Posterior vena cava (tissue), 2 donors: ENCODE measurements at regions of chr2 and their contacts with region 1.

Region 1: DNA sequence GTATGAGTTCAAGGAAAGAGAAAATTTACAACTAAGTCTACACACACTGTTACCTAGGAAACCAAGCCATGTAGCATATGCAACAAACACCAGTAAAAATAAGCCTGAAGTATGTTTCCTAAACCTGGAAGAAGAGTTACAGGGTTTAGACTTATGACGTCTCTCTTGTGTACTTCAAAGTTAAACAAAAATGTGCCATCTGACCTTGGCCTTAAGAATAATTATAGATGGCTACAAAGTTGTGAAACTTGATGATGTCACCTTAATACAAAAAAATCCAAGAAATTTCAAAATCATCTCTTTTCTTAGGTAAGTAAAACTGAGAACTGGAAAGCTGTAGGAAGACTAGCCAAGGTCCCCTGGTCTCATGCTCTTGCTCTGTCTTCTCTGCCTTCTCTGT is 297.6 kb upstream of the NRXN1 start:
- DNase-seq: no peak

Region 2: DNA sequence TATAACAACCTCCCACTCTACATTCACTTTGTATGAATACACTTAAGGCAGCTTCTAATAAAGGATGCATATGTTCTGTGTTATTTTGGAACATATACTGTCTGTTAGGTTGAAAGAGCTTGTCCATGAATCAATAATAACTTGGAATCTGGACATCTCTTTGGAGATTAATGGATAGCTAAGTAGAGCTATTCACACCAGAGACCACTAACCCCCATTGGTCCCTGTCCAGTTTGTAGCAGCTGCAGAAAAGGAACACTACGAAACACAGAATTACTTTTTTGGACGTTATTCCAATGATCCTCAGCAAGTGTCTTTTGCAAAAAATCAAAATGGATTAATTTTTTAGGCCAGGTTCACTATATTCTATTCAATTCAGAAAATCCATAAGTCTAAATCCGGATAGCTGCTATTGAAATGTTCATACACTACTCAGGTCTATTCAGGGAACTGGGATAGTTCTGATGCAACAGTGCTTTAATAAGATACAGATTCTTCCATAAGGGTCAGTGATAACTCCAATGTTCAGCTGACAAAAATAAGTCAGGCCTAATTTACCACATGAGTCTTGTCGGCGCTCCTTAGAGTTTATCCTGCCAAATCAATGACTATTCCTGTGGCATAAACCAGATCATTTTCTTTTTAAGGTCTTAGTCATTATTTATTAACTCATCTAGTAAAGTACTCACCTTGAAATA is 341.8 kb before region 1 on chr2:
- intact Hi-C with region 1: loop called in 1 of 2 experiments (anchors 10 kb)
- DNase-seq: no peak